ENCODE measurements at regions of chr6 and their contacts with region 1.

Region 1: GRCh38 chr6:54282186-54282585 is 26.1 kb upstream of the TINAG start:
- DNase-seq: peak; percentile 90
- ATAC-seq: peak; percentile 81
- H3K4me3 ChIP-seq: no peak overlapping the region
- H3K27ac ChIP-seq: peak overlapping the region; percentile 59
- H3K4me1 ChIP-seq: peaks cover 51% of the 10 kb centered on the region
- H3K27me3 ChIP-seq: no peaks in the 10 kb centered on the region
- CTCF ChIP-seq: no peak

Region 2: GRCh38 chr6:53811082-53811481 is 471.1 kb before region 1 on chr6:
- CTCF ChIA-PET with region 1: no interaction called
- POLR2A ChIA-PET with region 1: no interaction called
- intact Hi-C with region 1: loop called (anchors 5 kb)
- DNase-seq: peak; percentile 95
- ATAC-seq: peak; percentile 87
- H3K4me3 ChIP-seq: peak overlapping the region; percentile 33
- H3K27ac ChIP-seq: peak overlapping the region; percentile 36
- H3K4me1 ChIP-seq: peaks cover 40% of the 10 kb centered on the region
- H3K27me3 ChIP-seq: no peaks in the 10 kb centered on the region
- CTCF ChIP-seq: no peak

Region 3: DNA sequence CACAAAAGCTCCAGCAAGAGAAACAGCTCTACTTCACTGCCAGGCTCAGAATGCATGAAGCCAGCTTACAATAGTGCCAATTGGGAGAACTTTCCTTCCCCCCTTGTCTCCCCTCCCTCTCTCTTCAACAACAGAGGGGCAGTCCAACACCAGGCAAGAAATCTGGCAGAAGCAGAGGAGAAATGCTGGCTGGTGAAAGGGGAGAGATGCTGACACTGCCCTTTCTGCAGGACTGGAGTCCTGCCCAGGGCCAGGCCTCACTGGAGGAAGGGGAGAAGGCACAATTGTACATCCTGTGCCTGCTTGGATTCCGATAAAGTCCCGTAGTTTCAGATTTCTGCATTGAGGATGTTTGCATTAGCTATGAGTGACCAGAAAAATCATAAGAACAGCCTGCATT is 338.8 kb before region 1 on chr6:
- CTCF ChIA-PET with region 1: interaction called, 14 read pairs
- POLR2A ChIA-PET with region 1: no interaction called
- intact Hi-C with region 1: no loop called
- DNase-seq: no peak
- ATAC-seq: peak; percentile 59
- H3K4me3 ChIP-seq: no peak overlapping the region
- H3K27ac ChIP-seq: no peak overlapping the region
- H3K4me1 ChIP-seq: no peaks in the 10 kb centered on the region
- H3K27me3 ChIP-seq: no peaks in the 10 kb centered on the region
- CTCF ChIP-seq: no peak

Region 4: GRCh38 chr6:54366667-54367327 is 84.6 kb after region 1 on chr6:
- CTCF ChIA-PET with region 1: interaction called, 3 read pairs
- POLR2A ChIA-PET with region 1: no interaction called
- intact Hi-C with region 1: loop called (anchors 5 kb)
- DNase-seq: peak; percentile 95
- ATAC-seq: peak; percentile 94
- H3K4me3 ChIP-seq: peak overlapping the region; percentile 8
- H3K27ac ChIP-seq: peak overlapping the region; percentile 50
- H3K4me1 ChIP-seq: peaks cover 24% of the 10 kb centered on the region
- H3K27me3 ChIP-seq: no peaks in the 10 kb centered on the region
- CTCF ChIP-seq: no peak

Region 5: GRCh38 chr6:54493138-54493537 is 211.0 kb after region 1 on chr6:
- CTCF ChIA-PET with region 1: no interaction called
- POLR2A ChIA-PET with region 1: no interaction called
- intact Hi-C with region 1: loop called (anchors 10 kb)
- DNase-seq: peak; percentile 92
- ATAC-seq: peak; percentile 86
- H3K4me3 ChIP-seq: no peak overlapping the region
- H3K27ac ChIP-seq: peak overlapping the region; percentile 74
- H3K4me1 ChIP-seq: peaks cover 42% of the 10 kb centered on the region
- H3K27me3 ChIP-seq: no peaks in the 10 kb centered on the region
- CTCF ChIP-seq: no peak

Measured in PC-3 (cell line).